ENCODE measurements at regions of chr9 and their contacts with region 1.

Region 1: GRCh38 chr9:97853844-97854695 is 1.0 kb downstream of the FOXE1 start:
- DNase-seq: peak; percentile 49
- ATAC-seq: peak; percentile 81
- H3K4me3 Mint-ChIP-seq: peak overlapping the region; percentile 85
- H3K27ac Mint-ChIP-seq: no peak overlapping the region
- H3K4me1 Mint-ChIP-seq: peaks cover 25% of the 10 kb centered on the region
- H3K27me3 Mint-ChIP-seq: peaks cover 62% of the 10 kb centered on the region
- CTCF ChIP-seq: no peak

Region 2: GRCh38 chr9:97866848-97867247 is 12.8 kb after region 1 on chr9:
- CTCF ChIA-PET with region 1: no interaction called
- POLR2A ChIA-PET with region 1: interaction called, 5 read pairs
- intact Hi-C with region 1: loop called (anchors 2 kb)
- DNase-seq: no peak
- ATAC-seq: peak; percentile 47
- H3K4me3 Mint-ChIP-seq: peak overlapping the region; percentile 32
- H3K27ac Mint-ChIP-seq: peak overlapping the region; percentile 46
- H3K4me1 Mint-ChIP-seq: peaks cover 8% of the 10 kb centered on the region
- H3K27me3 Mint-ChIP-seq: peaks cover 28% of the 10 kb centered on the region
- CTCF ChIP-seq: no peak

Region 3: GRCh38 chr9:98989036-98990000 is 1135.2 kb after region 1 on chr9:
- CTCF ChIA-PET with region 1: no interaction called
- POLR2A ChIA-PET with region 1: no interaction called
- intact Hi-C with region 1: no loop called
- DNase-seq: no peak
- ATAC-seq: no peak
- H3K4me3 Mint-ChIP-seq: no peak overlapping the region
- H3K27ac Mint-ChIP-seq: no peak overlapping the region
- H3K4me1 Mint-ChIP-seq: peaks cover 21% of the 10 kb centered on the region
- H3K27me3 Mint-ChIP-seq: no peaks in the 10 kb centered on the region
- CTCF ChIP-seq: no peak

Measured in activated B cell treated with CpG ODN at 0.5 μM for 24 hours (primary cell).